Esophagus muscularis mucosa (tissue), 4 donors: ENCODE measurements at regions of chr18 and their contacts with region 1.

Region 1: GRCh38 chr18:23131693-23132319 is 3.5 kb upstream of the CABLES1 start:
- DNase-seq: no peak
- H3K4me3 ChIP-seq: no peak overlapping the region
- H3K27ac ChIP-seq: no peak overlapping the region
- H3K4me1 ChIP-seq: peaks cover 18 to 26% (median 22%) of the 10 kb centered on the region in 4 donors
- H3K27me3 ChIP-seq: peaks cover 0 to 26% (median 7%) of the 10 kb centered on the region in 4 donors
- CTCF ChIP-seq: peak; percentile 73 to 82 (median 77)
- EP300 ChIP-seq: no peak
- POLR2A ChIP-seq: no peak

Region 2: GRCh38 chr18:23077493-23078256 is 54.1 kb before region 1 on chr18:
- intact Hi-C with region 1: no loop called
- DNase-seq: no peak
- H3K4me3 ChIP-seq: no peak overlapping the region
- H3K27ac ChIP-seq: no peak overlapping the region
- H3K4me1 ChIP-seq: peaks cover 0 to 9% (median 7%) of the 10 kb centered on the region in 4 donors
- H3K27me3 ChIP-seq: no peaks in the 10 kb centered on the region
- CTCF ChIP-seq: no peak
- EP300 ChIP-seq: no peak
- POLR2A ChIP-seq: no peak

Region 3: GRCh38 chr18:23237524-23238151 is 105.8 kb after region 1 on chr18:
- intact Hi-C with region 1: loop called (anchors 5 kb)
- DNase-seq: no peak
- H3K4me3 ChIP-seq: peak overlapping the region; percentile 44 to 47 (median 46)
- H3K27ac ChIP-seq: peak overlapping the region; percentile 77 to 83 (median 78)
- H3K4me1 ChIP-seq: peaks cover 18 to 23% (median 22%) of the 10 kb centered on the region in 4 donors
- H3K27me3 ChIP-seq: no peaks in the 10 kb centered on the region
- CTCF ChIP-seq: peak in 1 of 3 experiments; percentile 34
- EP300 ChIP-seq: no peak
- POLR2A ChIP-seq: no peak

Region 4: GRCh38 chr18:23377669-23378301 is 246.0 kb after region 1 on chr18:
- intact Hi-C with region 1: loop called (anchors 1 kb)
- DNase-seq: no peak
- H3K4me3 ChIP-seq: no peak overlapping the region
- H3K27ac ChIP-seq: peak overlapping the region; percentile 75 to 82 (median 78)
- H3K4me1 ChIP-seq: peaks cover 11 to 30% (median 21%) of the 10 kb centered on the region in 4 donors
- H3K27me3 ChIP-seq: no peaks in the 10 kb centered on the region
- CTCF ChIP-seq: no peak
- EP300 ChIP-seq: no peak
- POLR2A ChIP-seq: no peak

Region 5: DNA sequence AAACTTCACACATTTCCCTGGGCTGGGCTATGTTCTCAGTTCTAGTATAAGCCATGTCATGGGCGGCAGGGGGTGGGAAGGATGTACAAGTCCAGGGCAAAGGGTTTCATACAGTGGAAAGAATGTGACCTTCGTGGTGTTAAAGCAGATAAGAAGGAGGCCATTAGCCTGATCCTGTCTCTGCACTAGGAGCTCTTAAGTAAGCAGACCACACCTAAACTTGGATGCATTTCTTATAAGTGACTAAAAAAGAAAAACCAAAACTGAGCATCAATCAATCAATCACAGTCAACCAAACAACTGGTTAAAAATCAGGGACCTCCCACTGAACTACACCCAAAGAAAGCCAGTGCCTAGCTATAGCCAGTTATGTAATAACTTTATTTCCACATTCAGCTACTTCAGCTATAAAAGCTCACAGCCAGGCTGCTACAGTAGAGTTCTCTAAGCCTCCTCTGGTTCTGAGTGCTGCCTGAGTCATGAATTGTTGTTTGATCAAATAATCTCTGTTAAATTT is 274.5 kb after region 1 on chr18:
- intact Hi-C with region 1: loop called (anchors 2 kb)
- DNase-seq: no peak
- H3K4me3 ChIP-seq: no peak overlapping the region
- H3K27ac ChIP-seq: no peak overlapping the region
- H3K4me1 ChIP-seq: no peaks in the 10 kb centered on the region
- H3K27me3 ChIP-seq: no peaks in the 10 kb centered on the region
- CTCF ChIP-seq: no peak
- EP300 ChIP-seq: no peak
- POLR2A ChIP-seq: no peak